Panc1 (cell line): ENCODE measurements at regions of chr11 and their contacts with region 1.

Region 1: GRCh38 chr11:116651098-116651736 is 121.6 kb downstream of the BUD13 start:
- DNase-seq: no peak
- ATAC-seq: no peak
- H3K4me3 ChIP-seq: no peak overlapping the region
- H3K27ac ChIP-seq: no peak overlapping the region
- H3K4me1 ChIP-seq: no peaks in the 10 kb centered on the region
- H3K27me3 ChIP-seq: peaks cover 5% of the 10 kb centered on the region; the same call in 1 of the 2 replicates
- CTCF ChIP-seq: no peak

Region 2: DNA sequence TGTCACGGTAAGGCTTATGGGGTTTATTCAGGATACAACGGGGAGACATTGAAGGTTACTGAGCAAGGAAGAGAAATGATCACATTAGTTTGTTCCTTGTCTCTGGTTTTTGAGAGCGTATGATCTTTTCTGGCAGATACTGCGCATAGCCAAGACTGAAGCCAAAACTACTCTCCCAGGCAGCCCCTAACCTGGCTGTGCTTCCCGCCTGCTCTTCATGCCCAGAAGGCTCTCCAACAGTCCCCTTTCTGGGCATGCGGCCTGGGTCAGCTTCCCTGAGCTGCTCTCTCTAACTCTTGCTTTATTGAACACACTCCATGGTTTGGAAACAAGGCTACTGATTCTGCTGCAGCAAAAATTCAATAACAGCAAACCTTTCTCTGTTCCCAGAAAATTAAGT is 185.0 kb before region 1 on chr11:
- CTCF ChIA-PET with region 1: interaction called, 12 read pairs
- POLR2A ChIA-PET with region 1: no interaction called
- in situ Hi-C with region 1: no loop called
- intact Hi-C with region 1: no loop called
- DNase-seq: no peak
- ATAC-seq: no peak
- H3K4me3 ChIP-seq: no peak overlapping the region
- H3K27ac ChIP-seq: no peak overlapping the region
- H3K4me1 ChIP-seq: no peaks in the 10 kb centered on the region
- H3K27me3 ChIP-seq: peaks cover 20% of the 10 kb centered on the region; the same call in 1 of the 2 replicates
- CTCF ChIP-seq: no peak

Region 3: GRCh38 chr11:116835791-116836631 is 184.8 kb after region 1 on chr11:
- CTCF ChIA-PET with region 1: no interaction called
- POLR2A ChIA-PET with region 1: no interaction called
- in situ Hi-C with region 1: no loop called
- intact Hi-C with region 1: no loop called
- DNase-seq: peak; percentile 53
- ATAC-seq: peak; percentile 92
- H3K4me3 ChIP-seq: peak overlapping the region; percentile 31 to 58
- H3K27ac ChIP-seq: peak overlapping the region; percentile 13; the same call in 1 of the 2 replicates
- H3K4me1 ChIP-seq: peaks cover 4% of the 10 kb centered on the region; the same call in 1 of the 2 replicates
- H3K27me3 ChIP-seq: no peaks in the 10 kb centered on the region
- CTCF ChIP-seq: peak; percentile 95

Region 4: GRCh38 chr11:117239300-117239699 is 588.1 kb after region 1 on chr11:
- CTCF ChIA-PET with region 1: no interaction called
- POLR2A ChIA-PET with region 1: interaction called, 12 read pairs
- in situ Hi-C with region 1: no loop called
- intact Hi-C with region 1: no loop called
- DNase-seq: no peak
- ATAC-seq: peak; percentile 83
- H3K4me3 ChIP-seq: no peak overlapping the region
- H3K27ac ChIP-seq: no peak overlapping the region
- H3K4me1 ChIP-seq: peaks cover under 1% of the 10 kb centered on the region
- H3K27me3 ChIP-seq: no peaks in the 10 kb centered on the region
- CTCF ChIP-seq: no peak